CD8-positive, alpha-beta T cell (primary cell): ENCODE measurements at regions of chr6 and their contacts with region 1.

Region 1: DNA sequence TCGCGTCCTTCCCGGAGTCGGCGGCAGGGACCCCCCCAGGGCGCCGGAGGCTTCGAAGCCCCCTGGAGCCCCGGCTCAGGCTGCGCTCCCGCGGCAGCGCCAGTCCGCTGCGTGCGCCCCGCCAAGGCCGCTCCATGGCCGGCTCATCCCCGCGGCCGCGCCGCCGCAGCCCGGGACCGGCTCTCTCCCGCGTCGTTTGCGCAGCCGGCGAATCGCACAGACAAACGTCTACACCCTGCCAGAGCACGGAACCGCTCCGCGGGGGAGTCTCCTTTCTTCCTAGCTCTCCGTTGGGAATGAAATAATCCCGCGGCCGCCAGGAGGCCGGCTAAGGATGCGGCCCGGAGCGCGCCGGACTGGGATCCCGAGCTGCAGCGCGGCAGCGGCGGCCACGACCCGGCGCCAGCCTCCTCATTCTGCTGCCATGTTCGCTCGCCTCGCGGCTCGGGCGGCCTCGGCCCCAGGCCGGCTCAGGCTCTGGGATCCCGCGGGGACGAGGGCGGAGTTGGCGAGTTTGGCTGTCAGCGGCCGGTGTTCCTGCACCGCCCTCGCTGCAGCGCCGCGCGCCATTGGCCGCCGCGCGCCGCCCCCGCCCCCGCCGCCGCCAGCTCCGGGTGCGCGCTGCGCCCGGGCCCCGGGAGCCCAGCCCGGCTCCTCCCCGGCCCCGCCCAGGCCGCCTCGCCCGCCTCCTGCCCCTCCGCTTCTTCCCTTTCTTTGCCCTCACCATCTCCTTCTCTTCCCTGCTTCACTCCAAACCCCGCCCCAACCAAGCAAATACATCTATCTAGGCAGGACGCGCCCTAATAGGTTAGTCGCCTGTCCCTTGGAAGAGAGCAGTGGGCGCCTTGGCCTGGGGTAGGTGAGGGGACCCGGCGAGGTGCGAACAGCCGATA is at the start of gene GFOD1:
- DNase-seq: peak; percentile 28 to 87 (median 69)
- ATAC-seq: peak; percentile 76
- H3K4me3 ChIP-seq: peak within 1 kb of the TSS; percentile 72 to 80
- H3K4me3 Mint-ChIP-seq: peak within 1 kb of the TSS; percentile 86
- H3K27ac ChIP-seq: peak within 1 kb of the TSS; percentile 36 to 51
- H3K27ac Mint-ChIP-seq: peak within 1 kb of the TSS; percentile 60
- H3K4me1 ChIP-seq: peaks cover 11% of the 10 kb centered on the region
- H3K4me1 Mint-ChIP-seq: peaks cover 36% of the 10 kb centered on the region
- H3K27me3 ChIP-seq: no peaks in the 10 kb centered on the region
- H3K27me3 Mint-ChIP-seq: peaks cover 7% of the 10 kb centered on the region
- CTCF ChIP-seq: no peak
- total RNA-seq, gene GFOD1: 5.6 to 7.6 TPM

Region 2: DNA sequence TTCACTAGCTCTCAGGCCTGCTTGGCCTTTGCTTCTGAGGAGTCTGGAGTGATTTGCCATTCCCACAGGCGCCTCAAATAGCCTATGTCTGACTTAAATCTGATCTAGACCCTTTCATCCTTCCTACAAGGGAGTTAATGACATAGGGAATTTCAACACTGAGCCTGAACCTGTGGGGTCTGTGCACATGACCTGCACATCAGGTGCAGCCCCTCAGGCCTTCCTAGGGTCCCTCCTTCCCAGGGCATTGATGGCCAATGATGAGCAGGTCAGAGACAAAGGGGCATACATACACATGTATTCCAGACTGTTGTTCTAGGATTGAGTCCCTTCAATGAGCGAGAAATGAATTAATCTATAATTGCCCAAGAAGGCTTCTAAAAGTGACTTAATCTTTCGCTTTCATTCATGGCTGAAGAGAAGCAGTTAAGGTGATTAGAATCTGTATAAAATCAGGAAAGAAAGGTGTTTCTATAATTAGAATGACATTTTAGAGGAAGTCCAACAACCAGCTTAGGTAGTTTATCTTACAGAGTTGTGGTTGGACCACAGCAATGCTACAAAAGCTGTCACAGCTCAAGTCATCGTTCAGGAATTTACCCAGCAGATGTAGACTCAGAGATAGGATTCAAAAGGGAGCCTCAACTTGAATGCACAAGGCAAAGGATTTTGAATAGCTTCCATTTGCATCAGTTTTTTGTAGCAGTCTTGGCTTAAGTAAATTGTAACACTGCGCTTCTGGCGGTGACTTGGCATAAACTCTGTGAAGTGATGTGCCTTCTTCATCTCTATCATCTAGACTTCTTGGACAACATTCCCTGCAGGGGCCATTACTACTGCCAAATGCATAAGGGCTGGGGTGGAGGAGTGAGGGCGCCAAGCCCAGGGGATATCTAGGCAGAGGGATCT is 132.1 kb before region 1 on chr6:
- CTCF ChIA-PET with region 1: interaction called, 3 read pairs
- POLR2A ChIA-PET with region 1: no interaction called
- intact Hi-C with region 1: loop called in 1 of 2 experiments (anchors 5 kb)
- DNase-seq: peak in 3 of 9 experiments; percentile 16 to 71 (median 49)
- ATAC-seq: peak; percentile 68
- H3K4me3 ChIP-seq: peak overlapping the region; percentile 16 to 22
- H3K4me3 Mint-ChIP-seq: peak overlapping the region; percentile 78
- H3K27ac ChIP-seq: peak overlapping the region; percentile 10 to 50
- H3K27ac Mint-ChIP-seq: peak overlapping the region; percentile 93
- H3K4me1 ChIP-seq: peaks cover 29% of the 10 kb centered on the region
- H3K4me1 Mint-ChIP-seq: peaks cover 41% of the 10 kb centered on the region
- H3K27me3 ChIP-seq: no peaks in the 10 kb centered on the region
- H3K27me3 Mint-ChIP-seq: no peaks in the 10 kb centered on the region
- CTCF ChIP-seq: no peak

Region 3: GRCh38 chr6:13427801-13428582 is 59.4 kb before region 1 on chr6:
- CTCF ChIA-PET with region 1: no interaction called
- POLR2A ChIA-PET with region 1: interaction called, 6 read pairs
- intact Hi-C with region 1: loop called in 1 of 2 experiments (anchors 2 kb)
- DNase-seq: peak; percentile 25 to 92 (median 68)
- ATAC-seq: peak; percentile 80
- H3K4me3 ChIP-seq: peak overlapping the region; percentile 1 to 19
- H3K4me3 Mint-ChIP-seq: peak overlapping the region; percentile 70
- H3K27ac ChIP-seq: peak overlapping the region; percentile 8 to 89
- H3K27ac Mint-ChIP-seq: peak overlapping the region; percentile 89
- H3K4me1 ChIP-seq: peaks cover 26% of the 10 kb centered on the region
- H3K4me1 Mint-ChIP-seq: peaks cover 61% of the 10 kb centered on the region
- H3K27me3 ChIP-seq: no peaks in the 10 kb centered on the region
- H3K27me3 Mint-ChIP-seq: no peaks in the 10 kb centered on the region
- CTCF ChIP-seq: peak; percentile 25

Region 4: GRCh38 chr6:13454286-13455221 is 32.8 kb before region 1 on chr6:
- CTCF ChIA-PET with region 1: interaction called, 5 read pairs
- POLR2A ChIA-PET with region 1: no interaction called
- intact Hi-C with region 1: loop called (anchors 1 kb)
- DNase-seq: peak; percentile 31 to 92 (median 70)
- ATAC-seq: peak; percentile 80
- H3K4me3 ChIP-seq: peak overlapping the region; percentile 10 to 26
- H3K4me3 Mint-ChIP-seq: peak overlapping the region; percentile 62
- H3K27ac ChIP-seq: peak overlapping the region; percentile 18 to 77
- H3K27ac Mint-ChIP-seq: peak overlapping the region; percentile 90
- H3K4me1 ChIP-seq: peaks cover 31% of the 10 kb centered on the region
- H3K4me1 Mint-ChIP-seq: peaks cover 36% of the 10 kb centered on the region
- H3K27me3 ChIP-seq: no peaks in the 10 kb centered on the region
- H3K27me3 Mint-ChIP-seq: no peaks in the 10 kb centered on the region
- CTCF ChIP-seq: peak; percentile 25

Region 5: DNA sequence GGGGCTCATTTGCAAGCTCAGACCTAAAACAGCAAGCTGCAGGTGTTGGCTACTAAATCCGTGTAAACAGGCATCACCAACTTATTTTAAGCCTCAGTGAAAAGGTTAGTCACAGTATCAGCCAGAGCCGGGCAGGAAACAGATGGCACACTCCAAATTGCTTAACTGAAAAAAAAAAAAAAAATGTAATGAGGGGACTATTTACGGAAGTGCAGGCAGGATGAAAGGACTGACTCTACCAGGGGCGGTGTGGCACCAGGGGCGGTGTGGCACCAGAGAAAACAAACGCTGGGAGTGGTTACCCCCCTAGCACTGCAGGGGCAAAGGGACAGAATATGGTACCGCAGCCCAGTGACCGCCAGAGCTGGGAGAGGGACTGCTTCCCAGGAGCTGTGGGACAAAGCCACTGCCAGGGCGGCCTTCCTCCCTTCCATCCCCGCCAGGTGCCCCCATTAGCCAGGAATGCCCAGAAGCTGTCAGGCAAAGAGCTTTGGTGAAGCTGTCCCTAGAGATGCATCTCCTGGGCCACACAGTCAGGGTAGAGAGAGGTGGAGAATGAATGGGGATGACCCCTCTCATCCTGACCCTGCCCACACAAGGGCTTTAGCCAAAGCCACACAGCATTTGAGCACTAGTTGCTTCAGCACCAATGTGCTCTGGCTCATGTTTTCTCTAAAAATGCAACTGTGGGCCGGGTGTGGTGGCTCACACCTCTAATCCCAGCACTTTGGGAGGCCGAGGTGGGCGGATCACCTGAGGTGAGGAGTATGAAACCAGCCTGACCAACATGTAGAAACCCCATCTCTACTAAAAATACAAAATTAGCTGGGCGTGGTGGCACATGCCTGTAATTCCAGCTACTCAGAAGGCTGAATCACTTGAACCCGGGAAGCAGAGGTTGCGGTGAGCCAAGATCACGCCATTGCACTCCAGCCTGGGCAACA is 39.6 kb after region 1 on chr6:
- CTCF ChIA-PET with region 1: interaction called, 3 read pairs
- POLR2A ChIA-PET with region 1: no interaction called
- intact Hi-C with region 1: loop called in 1 of 2 experiments (anchors 2 kb)
- DNase-seq: peak in 8 of 9 experiments; percentile 19 to 77 (median 50)
- ATAC-seq: peak; percentile 94
- H3K4me3 ChIP-seq: no peak overlapping the region
- H3K4me3 Mint-ChIP-seq: no peak overlapping the region
- H3K27ac ChIP-seq: no peak overlapping the region
- H3K27ac Mint-ChIP-seq: peak overlapping the region; percentile 25
- H3K4me1 ChIP-seq: peaks cover 16% of the 10 kb centered on the region
- H3K4me1 Mint-ChIP-seq: peaks cover 20% of the 10 kb centered on the region
- H3K27me3 ChIP-seq: no peaks in the 10 kb centered on the region
- H3K27me3 Mint-ChIP-seq: no peaks in the 10 kb centered on the region
- CTCF ChIP-seq: no peak

Region 6: DNA sequence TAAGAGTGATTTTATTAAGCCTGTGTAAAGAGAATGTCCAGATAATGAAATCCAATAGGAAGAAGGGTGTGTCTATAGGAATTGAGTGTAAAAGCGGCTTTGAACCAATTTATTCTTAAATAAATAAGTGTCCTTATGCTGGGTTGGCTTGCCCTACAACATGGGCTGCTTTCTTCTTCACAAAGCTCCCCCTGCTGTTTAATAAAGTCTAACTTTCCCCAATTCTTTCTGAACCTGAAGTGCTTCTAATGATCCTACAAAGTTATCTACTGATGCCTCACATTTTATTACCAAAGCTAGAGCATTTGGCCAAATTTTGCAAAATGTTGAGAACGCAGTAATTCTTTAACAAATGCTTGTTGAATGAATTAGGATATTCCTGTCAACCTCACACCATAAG is 50.7 kb after region 1 on chr6:
- CTCF ChIA-PET with region 1: interaction called, 4 read pairs
- POLR2A ChIA-PET with region 1: no interaction called
- intact Hi-C with region 1: loop called in 1 of 2 experiments (anchors 1 kb)
- DNase-seq: peak in 2 of 9 experiments; percentile 52 to 66
- ATAC-seq: peak; percentile 36
- H3K4me3 ChIP-seq: no peak overlapping the region
- H3K4me3 Mint-ChIP-seq: no peak overlapping the region
- H3K27ac ChIP-seq: no peak overlapping the region
- H3K27ac Mint-ChIP-seq: no peak overlapping the region
- H3K4me1 ChIP-seq: no peaks in the 10 kb centered on the region
- H3K4me1 Mint-ChIP-seq: no peaks in the 10 kb centered on the region
- H3K27me3 ChIP-seq: no peaks in the 10 kb centered on the region
- H3K27me3 Mint-ChIP-seq: no peaks in the 10 kb centered on the region
- CTCF ChIP-seq: peak; percentile 44